ENCODE measurements at regions of chr18 and their contacts with region 1.

Region 1: DNA sequence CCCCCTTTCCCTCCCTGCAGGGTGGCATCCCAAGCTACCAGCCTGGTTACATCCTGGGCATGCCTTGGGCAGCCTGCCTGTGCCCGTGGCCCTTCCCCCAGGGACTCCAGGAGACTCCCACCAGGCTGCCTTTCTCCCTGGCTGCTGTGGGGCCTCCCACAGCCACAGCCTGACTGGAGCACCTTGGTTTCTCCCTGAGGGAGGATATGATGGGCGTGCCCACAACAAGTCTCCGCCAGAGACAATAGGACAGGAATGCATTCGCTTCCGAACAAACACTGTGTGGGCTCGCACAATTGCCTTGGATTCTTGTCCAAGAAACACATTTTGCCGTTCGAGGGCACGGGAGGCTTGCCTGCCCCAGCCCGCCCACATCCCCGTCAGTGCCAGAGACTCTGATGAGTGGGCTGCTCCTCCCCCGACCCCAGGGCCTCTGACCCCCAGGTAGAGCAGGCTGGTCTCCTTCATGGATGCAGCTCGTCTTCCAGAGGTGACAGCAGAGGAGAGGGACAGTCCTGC is 102.1 kb downstream of the SMAD7 start:
- DNase-seq: no peak
- ATAC-seq: no peak
- H3K4me3 ChIP-seq: no peak overlapping the region
- H3K27ac ChIP-seq: no peak overlapping the region
- H3K4me1 ChIP-seq: peaks cover 6% of the 10 kb centered on the region; the same call in 1 of the 2 replicates
- H3K27me3 ChIP-seq: no peaks in the 10 kb centered on the region
- CTCF ChIP-seq: no peak
- POLR2A ChIP-seq: no peak
- RAD21 ChIP-seq: no peak

Region 2: GRCh38 chr18:48859311-48860268 is 10.9 kb after region 1 on chr18:
- CTCF ChIA-PET with region 1: no interaction called
- POLR2A ChIA-PET with region 1: interaction called, 14 read pairs
- dilution Hi-C with region 1: no loop called
- in situ Hi-C with region 1: no loop called
- intact Hi-C with region 1: no loop called
- DNase-seq: no peak
- ATAC-seq: no peak
- H3K4me3 ChIP-seq: no peak overlapping the region
- H3K27ac ChIP-seq: no peak overlapping the region
- H3K4me1 ChIP-seq: peaks cover 4% of the 10 kb centered on the region; the same call in 1 of the 2 replicates
- H3K27me3 ChIP-seq: no peaks in the 10 kb centered on the region
- CTCF ChIP-seq: no peak
- POLR2A ChIP-seq: no peak
- RAD21 ChIP-seq: no peak

Region 3: GRCh38 chr18:48896690-48897511 is 48.2 kb after region 1 on chr18:
- CTCF ChIA-PET with region 1: no interaction called
- POLR2A ChIA-PET with region 1: no interaction called
- dilution Hi-C with region 1: no loop called
- in situ Hi-C with region 1: no loop called
- intact Hi-C with region 1: no loop called
- DNase-seq: peak; percentile 17
- ATAC-seq: peak; percentile 36; the same call in 1 of the 2 replicates
- H3K4me3 ChIP-seq: no peak overlapping the region
- H3K27ac ChIP-seq: no peak overlapping the region
- H3K4me1 ChIP-seq: peaks cover 10% of the 10 kb centered on the region
- H3K27me3 ChIP-seq: no peaks in the 10 kb centered on the region
- CTCF ChIP-seq: 0 out of 2 replicates have a peak, but pooled peaks have one; percentile 12
- POLR2A ChIP-seq: no peak
- RAD21 ChIP-seq: no peak

Measured in IMR-90 (cell line).